B cell (primary cell): ENCODE measurements at regions of chr19 and their contacts with region 1.

Region 1: GRCh38 chr19:17405250-17406038 is at the start of gene BST2:
- DNase-seq: peak; percentile 81
- ATAC-seq: peak; percentile 91
- H3K4me3 ChIP-seq: peak within 1 kb of the TSS; percentile 62 to 95 (median 75)
- H3K4me3 Mint-ChIP-seq: peak within 1 kb of the TSS; percentile 85
- H3K27ac ChIP-seq: peak within 1 kb of the TSS; percentile 72 to 86
- H3K27ac Mint-ChIP-seq: peak within 1 kb of the TSS; percentile 86
- H3K4me1 ChIP-seq: peaks cover 26 to 45% of the 10 kb centered on the region in 2 donors
- H3K4me1 Mint-ChIP-seq: peaks cover 42% of the 10 kb centered on the region
- H3K27me3 ChIP-seq: no peaks in the 10 kb centered on the region
- H3K27me3 Mint-ChIP-seq: no peaks in the 10 kb centered on the region
- CTCF ChIP-seq: no peak
- total RNA-seq, gene BST2: 59.7 and 66.0 TPM in 2 replicates

Region 2: GRCh38 chr19:17358395-17358794 is 47.0 kb before region 1 on chr19:
- CTCF ChIA-PET with region 1: no interaction called
- POLR2A ChIA-PET with region 1: interaction called, 12 read pairs
- intact Hi-C with region 1: no loop called
- DNase-seq: no peak
- ATAC-seq: no peak
- H3K4me3 ChIP-seq: no peak overlapping the region
- H3K4me3 Mint-ChIP-seq: no peak overlapping the region
- H3K27ac ChIP-seq: no peak overlapping the region
- H3K27ac Mint-ChIP-seq: no peak overlapping the region
- H3K4me1 ChIP-seq: no peaks in the 10 kb centered on the region
- H3K4me1 Mint-ChIP-seq: no peaks in the 10 kb centered on the region
- H3K27me3 ChIP-seq: peaks cover 0 to 4% (median 0%) of the 10 kb centered on the region in 4 experiments
- H3K27me3 Mint-ChIP-seq: peaks cover 22% of the 10 kb centered on the region
- CTCF ChIP-seq: no peak

Region 3: DNA sequence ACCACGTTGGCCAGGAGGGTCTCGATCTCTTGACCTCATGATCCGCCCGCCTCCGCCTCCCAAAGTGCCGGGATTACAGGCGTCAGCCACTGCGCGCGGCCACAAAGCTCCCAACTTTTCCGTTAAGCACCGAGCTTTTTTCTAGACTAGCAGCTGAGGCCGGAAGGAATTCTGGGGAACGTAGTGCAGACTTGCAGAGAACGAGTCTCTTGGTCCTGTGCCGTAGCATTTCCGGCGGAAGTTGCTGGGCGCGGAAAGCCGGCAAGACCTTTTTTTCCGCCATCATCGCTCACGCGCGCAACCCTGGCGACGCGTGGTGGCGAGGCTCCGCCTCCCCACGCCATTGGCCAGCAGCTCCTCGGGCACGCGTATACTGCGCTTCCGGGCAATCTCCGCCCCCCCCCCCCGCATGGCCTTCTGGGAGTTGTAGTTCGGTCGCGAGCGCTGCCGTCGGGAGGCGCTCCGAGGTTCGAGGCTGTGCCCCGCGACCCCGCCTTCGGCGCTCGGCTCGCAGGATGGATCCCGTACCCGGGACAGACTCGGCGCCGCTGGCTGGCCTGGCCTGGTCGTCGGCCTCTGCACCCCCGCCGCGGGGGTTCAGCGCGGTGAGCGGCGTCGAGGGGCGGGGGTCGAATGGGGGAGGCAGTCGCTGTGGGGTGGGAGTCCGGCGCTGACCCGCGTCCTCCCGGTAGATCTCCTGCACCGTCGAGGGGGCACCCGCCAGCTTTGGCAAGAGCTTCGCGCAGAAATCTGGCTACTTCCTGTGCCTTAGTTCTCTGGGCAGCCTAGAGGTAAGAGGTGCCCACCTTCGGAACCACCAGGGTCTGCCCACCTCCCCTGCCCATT is 14.4 kb after region 1 on chr19 and contains the start of gene MVB12A:
- CTCF ChIA-PET with region 1: interaction called, 8 read pairs
- POLR2A ChIA-PET with region 1: interaction called, 10 read pairs
- intact Hi-C with region 1: loop called (anchors 1 kb)
- DNase-seq: peak; percentile 98
- ATAC-seq: peak; percentile 97
- H3K4me3 ChIP-seq: peak within 1 kb of the TSS; percentile 71 to 89 (median 76)
- H3K4me3 Mint-ChIP-seq: peak within 1 kb of the TSS; percentile 96
- H3K27ac ChIP-seq: peak within 1 kb of the TSS; percentile 33 to 60
- H3K27ac Mint-ChIP-seq: peak within 1 kb of the TSS; percentile 93
- H3K4me1 ChIP-seq: peaks cover 12 to 16% of the 10 kb centered on the region in 2 donors
- H3K4me1 Mint-ChIP-seq: peaks cover 15% of the 10 kb centered on the region
- H3K27me3 ChIP-seq: no peaks in the 10 kb centered on the region
- H3K27me3 Mint-ChIP-seq: no peaks in the 10 kb centered on the region
- CTCF ChIP-seq: no peak
- total RNA-seq, gene MVB12A: 26.8 and 33.6 TPM in 2 replicates

Region 4: GRCh38 chr19:17883627-17884410 is 478.4 kb after region 1 on chr19:
- CTCF ChIA-PET with region 1: no interaction called
- POLR2A ChIA-PET with region 1: no interaction called
- intact Hi-C with region 1: no loop called
- DNase-seq: no peak
- ATAC-seq: no peak
- H3K4me3 ChIP-seq: peak overlapping the region in 1 of 5 experiments; percentile 25
- H3K4me3 Mint-ChIP-seq: peak overlapping the region; percentile 34
- H3K27ac ChIP-seq: peak overlapping the region; percentile 48 to 58
- H3K27ac Mint-ChIP-seq: peak overlapping the region; percentile 46
- H3K4me1 ChIP-seq: peaks cover 37 to 39% of the 10 kb centered on the region in 2 donors
- H3K4me1 Mint-ChIP-seq: peaks cover 24% of the 10 kb centered on the region
- H3K27me3 ChIP-seq: no peaks in the 10 kb centered on the region
- H3K27me3 Mint-ChIP-seq: no peaks in the 10 kb centered on the region
- CTCF ChIP-seq: no peak